ENCODE measurements at regions of chr22 and their contacts with region 1.

Region 1: GRCh38 chr22:33188326-33188725 is 130.1 kb upstream of the SYN3 start:
- DNase-seq: no peak
- CTCF ChIP-seq: no peak

Region 2: GRCh38 chr22:33126881-33127280 is 61.4 kb before region 1 on chr22:
- in situ Hi-C with region 1: loop called (anchors 5 kb)
- DNase-seq: no peak
- CTCF ChIP-seq: no peak

Region 3: DNA sequence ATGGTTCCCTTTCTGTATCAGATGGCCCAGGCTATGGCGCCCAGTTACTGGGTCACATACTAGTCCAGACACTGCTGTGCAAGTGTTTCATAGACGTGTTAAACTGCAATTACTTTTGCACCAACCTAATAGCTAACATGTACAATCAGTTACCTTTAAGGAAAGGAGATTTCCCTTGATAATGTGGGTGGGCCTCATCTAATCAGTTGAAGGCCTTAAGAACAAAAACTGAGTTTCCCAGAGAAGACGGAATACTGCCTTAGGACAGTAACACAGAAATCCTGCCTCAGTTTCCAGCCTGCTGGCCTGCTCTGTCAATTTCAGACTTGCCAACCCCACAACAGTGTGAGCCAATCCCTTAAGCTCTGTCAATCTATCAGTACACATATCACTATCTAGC is 99.8 kb after region 1 on chr22:
- in situ Hi-C with region 1: no loop called
- DNase-seq: no peak
- CTCF ChIP-seq: no peak

Region 4: GRCh38 chr22:33504941-33505625 is 316.8 kb after region 1 on chr22:
- in situ Hi-C with region 1: no loop called
- DNase-seq: no peak
- CTCF ChIP-seq: no peak

Region 5: GRCh38 chr22:33697640-33698039 is 509.3 kb after region 1 on chr22:
- in situ Hi-C with region 1: no loop called
- DNase-seq: no peak
- CTCF ChIP-seq: no peak